ENCODE measurements at regions of chr17 and their contacts with region 1.

Region 1: DNA sequence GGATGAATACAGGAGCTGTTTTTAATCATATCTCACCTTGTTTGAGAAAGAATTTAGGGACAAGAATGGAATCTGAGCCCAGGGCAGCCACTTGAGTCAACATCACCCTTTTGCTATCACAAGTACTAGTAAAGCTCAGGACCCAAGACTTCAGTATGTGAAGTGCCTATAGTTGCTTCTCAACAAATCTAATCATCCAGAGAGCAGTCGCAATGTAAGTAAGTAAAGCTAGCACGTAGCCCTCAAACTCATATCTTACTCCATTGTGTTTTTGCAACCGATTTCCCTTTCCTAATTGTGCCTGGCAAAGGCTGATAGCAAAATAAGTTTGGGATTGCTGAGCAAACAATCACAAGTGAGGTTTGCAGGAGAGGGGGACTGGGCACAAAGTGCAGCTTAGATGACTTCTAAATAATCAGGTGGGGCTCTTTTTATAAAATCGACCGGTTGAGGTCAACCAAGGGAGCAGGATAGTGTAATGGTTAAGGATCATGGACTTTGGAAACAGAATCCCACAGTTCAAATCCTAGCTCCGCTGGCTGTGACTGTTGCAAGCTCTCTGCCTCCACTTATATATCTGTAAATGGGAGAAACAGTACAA is 13.0 kb downstream of the TOB1 start:
- DNase-seq: no peak

Region 2: DNA sequence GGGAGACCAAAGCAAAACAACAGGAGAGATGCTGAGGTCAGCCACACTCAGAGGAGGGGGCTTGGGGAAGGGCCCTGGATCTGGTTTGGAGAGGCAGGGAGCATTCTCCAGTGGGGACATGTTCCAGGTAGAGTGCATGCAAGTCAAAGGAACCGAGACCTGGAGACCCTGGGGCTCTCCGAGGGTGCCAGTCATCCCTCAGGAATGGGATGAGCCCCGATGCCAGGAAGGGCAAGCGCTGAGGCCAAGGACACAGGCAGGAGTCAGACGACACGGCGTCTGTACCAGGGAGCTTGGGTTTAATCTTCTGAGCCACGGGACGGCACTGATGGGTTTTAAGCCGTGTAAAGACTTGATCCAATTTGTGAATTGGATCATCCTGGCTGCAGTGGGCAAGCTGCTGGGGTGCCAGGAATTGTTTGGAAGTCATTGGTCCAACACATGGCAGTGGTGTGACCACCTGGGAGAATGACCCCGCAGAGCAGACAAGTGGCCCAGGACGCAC is 52.9 kb before region 1 on chr17:
- in situ Hi-C with region 1: loop called (anchors 5 kb)
- DNase-seq: no peak

Measured in G401 (cell line).